Activated naive CD4-positive, alpha-beta T cell treated with anti-CD3 and anti-CD28 coated beads, Interleukin-2, amount 10 ng/mL, durations not matched to agents 7 days and 5 days (primary cell): ENCODE measurements at regions of chr18 and their contacts with region 1.

Region 1: DNA sequence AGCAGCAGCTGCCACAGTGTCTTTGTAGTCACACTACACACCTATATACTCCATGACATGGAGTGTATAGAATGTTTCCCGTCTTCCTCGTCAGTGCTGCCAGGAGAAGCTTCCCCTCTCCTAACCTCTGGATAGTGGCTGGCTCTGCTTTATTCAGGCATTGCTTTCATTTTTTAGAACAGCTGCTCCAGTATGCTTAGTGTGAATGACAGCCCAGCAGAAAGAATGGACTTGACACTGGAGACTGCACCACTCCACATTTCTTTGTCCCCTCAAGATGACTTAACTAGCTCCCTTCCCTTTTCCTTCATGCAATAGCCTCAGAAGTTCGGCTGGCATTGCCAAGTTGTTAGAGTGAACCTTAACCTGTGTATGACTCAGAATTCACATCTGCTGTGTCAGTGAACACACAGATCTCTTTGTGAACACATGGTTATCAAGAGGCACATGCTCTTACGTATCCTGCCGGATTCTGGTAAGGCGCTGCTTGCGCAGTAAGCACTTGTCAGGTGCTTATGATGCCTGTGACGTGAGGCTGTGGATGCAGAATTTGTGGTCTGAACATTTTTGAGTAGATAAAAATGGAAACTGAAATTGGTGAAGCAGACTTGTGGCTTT is 73.9 kb downstream of the NEDD4L start:
- DNase-seq: no peak
- H3K4me3 Mint-ChIP-seq: no peak overlapping the region
- H3K27ac Mint-ChIP-seq: no peak overlapping the region
- H3K4me1 Mint-ChIP-seq: peaks cover 7% of the 10 kb centered on the region
- H3K27me3 Mint-ChIP-seq: peaks cover 17% of the 10 kb centered on the region

Region 2: DNA sequence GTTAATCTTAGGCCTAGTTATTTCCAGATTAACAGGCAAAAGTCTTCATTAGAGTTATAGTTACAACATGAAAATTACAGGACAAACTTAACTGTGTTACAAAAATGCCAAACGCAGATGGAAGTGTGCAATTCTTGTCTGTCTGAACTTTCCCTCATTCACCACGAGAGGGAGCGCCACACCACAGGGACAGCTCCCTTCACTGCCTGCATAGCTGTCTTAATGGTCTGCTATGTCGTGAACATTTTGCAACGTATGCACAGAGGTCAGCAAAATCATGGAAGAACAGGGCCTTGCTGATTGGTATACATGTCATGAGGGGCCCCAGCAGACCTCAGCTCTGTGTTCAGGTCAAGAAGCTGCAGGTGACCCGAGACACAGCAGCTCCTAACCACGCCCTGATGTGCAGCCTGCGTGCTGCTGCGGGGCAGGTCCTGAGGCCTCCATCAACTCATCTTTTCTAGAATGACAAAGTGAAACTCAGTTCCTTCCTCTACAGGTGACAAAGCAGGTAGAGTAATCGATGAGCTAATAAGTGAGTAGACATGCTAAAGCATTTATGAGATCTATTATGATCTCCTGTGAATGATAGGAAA is 236.0 kb before region 1 on chr18:
- CTCF ChIA-PET with region 1: interaction called, 17 read pairs
- DNase-seq: peak; percentile 62
- H3K4me3 Mint-ChIP-seq: no peak overlapping the region
- H3K27ac Mint-ChIP-seq: no peak overlapping the region
- H3K4me1 Mint-ChIP-seq: no peaks in the 10 kb centered on the region
- H3K27me3 Mint-ChIP-seq: peaks cover 4% of the 10 kb centered on the region

Region 3: GRCh38 chr18:58025733-58026132 is 92.2 kb before region 1 on chr18:
- CTCF ChIA-PET with region 1: no interaction called
- DNase-seq: no peak
- H3K4me3 Mint-ChIP-seq: no peak overlapping the region
- H3K27ac Mint-ChIP-seq: no peak overlapping the region
- H3K4me1 Mint-ChIP-seq: no peaks in the 10 kb centered on the region
- H3K27me3 Mint-ChIP-seq: peaks cover 8% of the 10 kb centered on the region

Region 4: DNA sequence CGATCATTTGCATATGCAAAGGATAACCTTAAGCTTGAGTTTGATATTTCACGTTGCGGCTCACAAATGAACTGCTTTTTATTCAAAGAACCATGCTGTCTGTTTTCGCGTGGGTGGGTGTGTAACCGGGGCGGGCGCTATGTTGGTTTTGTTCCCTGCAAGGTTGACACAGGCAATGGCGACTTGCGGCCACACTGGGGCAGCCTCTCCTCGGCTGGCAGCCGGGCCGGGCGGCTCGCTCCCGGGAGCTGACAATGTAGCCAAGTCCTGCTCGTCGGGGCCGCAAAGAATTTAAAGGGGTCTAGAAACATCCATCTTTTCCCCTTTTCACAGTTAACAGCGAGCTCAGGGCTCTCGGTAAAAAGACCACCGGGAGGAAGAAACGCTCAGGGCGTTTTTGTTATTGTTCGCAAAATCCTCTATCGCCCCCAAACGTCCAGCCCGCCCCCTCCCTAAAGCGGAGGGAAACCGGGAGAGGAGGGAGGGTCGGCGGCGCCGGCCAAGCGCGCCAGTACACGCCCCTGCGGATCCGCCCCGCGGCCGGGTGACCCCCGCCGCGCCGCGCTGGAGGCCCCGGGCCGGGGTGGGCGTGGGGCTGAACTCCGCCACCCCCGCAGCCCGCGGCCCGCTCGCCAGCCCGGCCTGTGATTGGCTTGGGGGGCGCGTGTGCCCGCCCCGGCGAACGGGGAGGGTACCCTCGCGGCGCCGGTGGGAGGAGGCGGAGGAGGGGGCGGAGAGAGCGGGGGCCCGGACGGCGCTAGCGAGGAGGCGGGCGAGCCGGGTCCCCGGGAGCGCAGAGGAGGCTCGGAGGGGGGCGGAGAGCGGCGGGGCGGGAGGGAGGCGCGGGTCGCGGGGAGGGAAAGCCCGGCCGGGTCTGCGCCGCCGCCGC is 74.2 kb before region 1 on chr18 and contains the start of gene NEDD4L:
- CTCF ChIA-PET with region 1: interaction called, 20 read pairs
- DNase-seq: peak; percentile 81
- H3K4me3 Mint-ChIP-seq: peak within 1 kb of the TSS; percentile 81
- H3K27ac Mint-ChIP-seq: peak within 1 kb of the TSS; percentile 3
- H3K4me1 Mint-ChIP-seq: peaks cover 28% of the 10 kb centered on the region
- H3K27me3 Mint-ChIP-seq: peaks cover 56% of the 10 kb centered on the region

Region 5: DNA sequence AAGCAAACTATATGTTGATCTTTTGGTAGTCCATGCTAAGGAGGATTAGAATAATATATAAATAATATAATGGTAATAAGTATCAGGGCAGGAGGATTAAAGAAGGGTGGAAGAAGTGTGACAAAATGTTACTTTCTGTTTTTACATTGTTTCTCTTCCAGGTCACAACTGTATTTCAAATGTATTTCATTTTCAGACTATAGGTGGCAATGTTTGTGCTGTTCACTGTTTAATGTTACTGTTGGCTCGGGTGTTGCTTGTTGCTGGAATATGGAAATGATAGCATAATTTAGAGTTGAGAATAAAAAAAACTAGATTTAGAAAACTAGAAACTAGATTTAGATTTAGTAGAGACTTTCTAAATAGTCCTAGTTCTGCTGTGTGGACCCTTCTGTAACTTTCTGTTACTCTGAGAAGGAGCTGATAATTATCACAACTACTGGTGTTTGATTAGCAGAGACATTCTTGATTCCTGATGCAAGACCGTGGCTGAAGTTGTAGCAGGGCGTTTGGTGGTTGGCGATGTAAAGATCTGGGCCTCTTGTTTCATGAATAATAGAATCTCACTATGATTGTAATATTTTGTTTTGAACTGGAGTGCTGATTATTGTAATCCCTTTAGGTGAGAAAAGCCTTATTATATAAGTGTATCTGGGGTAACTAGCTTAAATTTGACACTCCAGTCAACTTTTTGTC is 66.0 kb before region 1 on chr18:
- CTCF ChIA-PET with region 1: interaction called, 13 read pairs
- DNase-seq: no peak
- H3K4me3 Mint-ChIP-seq: no peak overlapping the region
- H3K27ac Mint-ChIP-seq: no peak overlapping the region
- H3K4me1 Mint-ChIP-seq: peaks cover 4% of the 10 kb centered on the region
- H3K27me3 Mint-ChIP-seq: peaks cover 18% of the 10 kb centered on the region

Region 6: DNA sequence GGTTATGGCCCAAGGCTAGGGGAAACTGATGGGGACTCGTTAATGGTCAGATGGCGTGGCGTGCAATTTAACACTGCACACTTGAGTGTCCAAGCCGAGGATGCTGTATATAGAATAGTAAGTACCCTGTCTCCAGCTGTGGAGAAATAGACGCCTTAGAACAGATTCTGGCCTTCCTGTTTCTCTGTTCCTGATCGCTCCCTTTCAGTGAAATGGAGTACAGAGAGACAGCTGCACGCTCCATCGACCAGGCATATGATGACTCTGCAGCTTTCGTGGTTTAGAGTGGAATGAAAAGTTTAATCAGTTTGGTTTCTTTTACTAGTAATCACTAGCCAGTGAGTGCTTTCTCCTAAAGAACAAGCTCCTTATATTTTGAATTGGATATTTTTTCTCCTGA is 139.6 kb after region 1 on chr18:
- CTCF ChIA-PET with region 1: no interaction called
- DNase-seq: no peak
- H3K4me3 Mint-ChIP-seq: no peak overlapping the region
- H3K27ac Mint-ChIP-seq: no peak overlapping the region
- H3K4me1 Mint-ChIP-seq: no peaks in the 10 kb centered on the region
- H3K27me3 Mint-ChIP-seq: no peaks in the 10 kb centered on the region